ENCODE measurements at regions of chr3 and their contacts with region 1.

Region 1: DNA sequence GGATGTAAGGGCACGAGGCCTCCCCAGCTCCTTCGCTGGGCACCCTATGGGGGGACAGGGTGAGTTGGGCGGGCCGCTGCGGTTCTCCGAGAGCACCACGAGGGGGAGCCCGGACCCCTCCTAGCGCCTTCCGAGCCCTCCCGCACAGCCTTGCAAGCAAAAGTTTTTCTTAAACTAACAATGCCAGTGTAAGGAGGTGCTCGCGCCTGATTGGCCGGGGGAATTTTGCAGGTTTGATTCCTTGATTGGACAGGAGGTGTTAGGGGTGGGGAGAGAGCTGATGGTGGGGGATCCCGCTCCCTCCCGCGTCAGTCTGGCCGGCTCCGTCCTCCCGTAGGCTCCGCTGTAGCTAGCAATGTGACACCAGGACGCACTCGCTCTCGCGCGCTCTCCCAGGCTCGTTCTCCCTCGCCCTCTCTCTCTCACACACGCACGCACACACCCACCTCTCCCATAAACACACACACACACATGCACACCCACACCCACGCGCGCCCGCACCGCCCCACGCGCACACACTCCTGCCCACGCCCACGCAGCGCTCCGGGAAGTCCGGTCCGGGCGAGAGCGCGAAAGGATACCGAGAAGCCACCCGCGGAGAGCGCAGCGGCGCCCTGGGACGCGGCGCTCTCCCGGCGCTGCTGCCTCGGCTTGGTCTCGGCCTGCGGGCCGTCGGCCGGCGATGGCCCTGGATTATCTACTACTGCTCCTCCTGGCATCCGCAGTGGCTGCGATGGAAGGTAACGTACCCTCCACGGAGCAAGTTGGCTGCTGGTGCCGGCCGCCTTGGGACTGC is at the start of gene EPHB1:
- DNase-seq: peak; percentile 77 to 91 (median 78)
- H3K4me3 ChIP-seq: peak within 1 kb of the TSS in 2 of 4 donors; percentile 40 to 56
- H3K27ac ChIP-seq: no peak within 1 kb of the TSS
- H3K4me1 ChIP-seq: peaks cover 5 to 12% of the 10 kb centered on the region in 2 donors
- H3K27me3 ChIP-seq: peaks cover 26% of the 10 kb centered on the region
- CTCF ChIP-seq: peak; percentile 68 to 85 (median 80)
- POLR2A ChIP-seq: no peak
- total RNA-seq, gene EPHB1: 0.12 to 3.4 (median 1.0) TPM

Region 2: DNA sequence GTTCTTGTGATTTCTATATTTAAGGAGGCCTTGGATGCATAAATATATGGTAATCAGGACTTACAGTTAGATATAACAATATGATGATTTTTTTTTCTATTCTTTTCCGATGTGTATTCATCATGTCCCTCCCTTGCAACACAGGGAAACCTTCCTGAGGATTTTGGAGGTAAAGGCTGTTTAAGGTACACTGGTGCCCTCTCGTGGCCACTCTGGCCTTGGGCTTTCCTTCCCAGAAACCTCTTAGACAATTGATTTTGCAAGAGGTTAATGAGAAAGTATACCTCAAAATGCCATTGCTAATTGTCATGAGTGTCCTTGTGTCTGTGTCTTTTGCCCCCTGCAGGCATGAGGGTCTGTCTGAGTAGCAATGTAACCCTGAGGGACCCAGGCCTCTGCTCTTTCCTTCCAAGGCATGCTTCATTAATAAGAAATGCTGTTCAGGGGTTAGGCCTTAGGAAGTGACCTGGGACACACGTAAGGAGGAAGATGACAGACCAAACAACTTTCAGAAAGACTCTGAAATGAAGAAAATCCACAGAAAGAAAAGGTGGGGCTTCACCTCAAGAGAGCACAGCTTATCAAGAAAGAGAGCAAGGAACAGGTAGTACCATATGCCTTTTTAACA is 1100.1 kb after region 1 on chr3:
- intact Hi-C with region 1: loop called in 1 of 2 experiments (anchors 5 kb)
- DNase-seq: peak; percentile 74 to 94 (median 83)
- H3K4me3 ChIP-seq: no peak overlapping the region
- H3K27ac ChIP-seq: no peak overlapping the region
- H3K4me1 ChIP-seq: no peaks in the 10 kb centered on the region
- H3K27me3 ChIP-seq: no peaks in the 10 kb centered on the region
- CTCF ChIP-seq: peak; percentile 70 to 88 (median 84)
- POLR2A ChIP-seq: no peak